Activated naive CD4-positive, alpha-beta T cell treated with anti-CD3 and anti-CD28 coated beads for 36 hours (primary cell): ENCODE measurements at regions of chr18 and their contacts with region 1.

Region 1: GRCh38 chr18:62425465-62426195 is 97.2 kb upstream of the ZCCHC2 start:
- DNase-seq: peak; percentile 80
- H3K4me3 Mint-ChIP-seq: peak overlapping the region; percentile 3
- H3K27ac Mint-ChIP-seq: peak overlapping the region; percentile 19
- H3K4me1 Mint-ChIP-seq: peaks cover 22% of the 10 kb centered on the region
- H3K27me3 Mint-ChIP-seq: no peaks in the 10 kb centered on the region

Region 2: DNA sequence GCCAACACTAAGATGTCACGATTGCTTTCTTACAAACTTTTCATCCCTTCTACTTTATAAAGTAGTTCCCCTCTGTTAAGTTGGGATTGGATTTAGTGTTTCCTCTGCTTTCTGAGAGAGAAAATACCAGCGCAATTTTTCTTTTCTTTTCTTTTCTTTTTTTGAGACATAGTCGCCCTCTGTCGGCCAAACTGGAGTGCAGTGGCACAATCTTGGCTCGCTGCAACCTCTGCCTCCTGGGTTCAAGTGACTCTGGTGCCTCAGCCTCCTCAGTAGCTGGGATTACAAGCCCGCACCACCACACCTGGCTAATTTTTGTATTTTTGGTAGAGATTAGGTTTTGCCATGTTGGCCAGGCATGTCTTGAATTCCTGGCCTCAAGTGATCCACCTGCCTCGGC is 229.5 kb before region 1 on chr18:
- CTCF ChIA-PET with region 1: no interaction called
- intact Hi-C with region 1: no loop called
- DNase-seq: no peak
- H3K4me3 Mint-ChIP-seq: no peak overlapping the region
- H3K27ac Mint-ChIP-seq: no peak overlapping the region
- H3K4me1 Mint-ChIP-seq: peaks cover 73% of the 10 kb centered on the region
- H3K27me3 Mint-ChIP-seq: no peaks in the 10 kb centered on the region

Region 3: GRCh38 chr18:62258616-62259015 is 167.0 kb before region 1 on chr18:
- CTCF ChIA-PET with region 1: no interaction called
- intact Hi-C with region 1: no loop called
- DNase-seq: no peak
- H3K4me3 Mint-ChIP-seq: no peak overlapping the region
- H3K27ac Mint-ChIP-seq: no peak overlapping the region
- H3K4me1 Mint-ChIP-seq: no peaks in the 10 kb centered on the region
- H3K27me3 Mint-ChIP-seq: no peaks in the 10 kb centered on the region

Region 4: DNA sequence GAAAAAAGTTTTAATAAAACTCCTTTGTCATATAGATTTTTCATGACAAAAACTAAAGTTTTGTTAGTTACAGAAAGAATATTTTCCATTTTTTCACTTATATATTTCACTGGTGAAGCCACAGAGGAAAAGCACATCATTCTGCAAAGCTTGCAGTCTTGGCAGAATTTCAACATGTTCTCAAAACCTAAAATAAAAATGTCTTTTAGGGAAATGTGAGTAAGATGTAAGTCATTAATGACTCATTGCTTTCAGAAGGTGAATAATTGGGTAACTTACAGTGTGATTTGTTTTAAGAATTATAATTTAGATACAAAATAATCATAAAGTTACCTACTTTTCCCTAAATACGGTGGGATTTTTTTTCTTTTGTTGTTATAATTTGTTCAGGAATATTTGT is 143.9 kb before region 1 on chr18:
- CTCF ChIA-PET with region 1: interaction called, 3 read pairs
- intact Hi-C with region 1: loop called (anchors 1 kb)
- DNase-seq: no peak
- H3K4me3 Mint-ChIP-seq: no peak overlapping the region
- H3K27ac Mint-ChIP-seq: no peak overlapping the region
- H3K4me1 Mint-ChIP-seq: peaks cover 39% of the 10 kb centered on the region
- H3K27me3 Mint-ChIP-seq: no peaks in the 10 kb centered on the region

Region 5: DNA sequence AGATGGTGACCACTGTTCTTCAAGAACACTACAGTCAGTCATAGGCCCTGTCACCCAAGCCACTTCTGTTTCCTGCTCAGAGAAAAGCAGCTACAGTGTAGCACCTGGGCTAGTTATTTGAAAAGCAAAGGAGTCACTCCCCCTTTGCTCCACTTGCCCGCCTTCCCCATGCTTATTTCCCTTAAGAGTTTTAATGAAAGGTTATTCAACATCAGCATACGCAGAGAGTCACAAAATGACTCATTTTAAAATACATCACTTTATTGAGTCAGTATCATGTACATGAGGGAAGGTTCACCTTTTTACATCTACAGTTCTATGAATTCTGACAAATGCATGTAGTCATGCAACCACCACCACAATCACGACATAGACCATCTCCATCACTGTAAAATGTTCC is 29.2 kb before region 1 on chr18:
- CTCF ChIA-PET with region 1: interaction called, 5 read pairs
- intact Hi-C with region 1: loop called (anchors 1 kb)
- DNase-seq: peak; percentile 40
- H3K4me3 Mint-ChIP-seq: no peak overlapping the region
- H3K27ac Mint-ChIP-seq: peak overlapping the region; percentile 4
- H3K4me1 Mint-ChIP-seq: peaks cover 9% of the 10 kb centered on the region
- H3K27me3 Mint-ChIP-seq: no peaks in the 10 kb centered on the region

Region 6: DNA sequence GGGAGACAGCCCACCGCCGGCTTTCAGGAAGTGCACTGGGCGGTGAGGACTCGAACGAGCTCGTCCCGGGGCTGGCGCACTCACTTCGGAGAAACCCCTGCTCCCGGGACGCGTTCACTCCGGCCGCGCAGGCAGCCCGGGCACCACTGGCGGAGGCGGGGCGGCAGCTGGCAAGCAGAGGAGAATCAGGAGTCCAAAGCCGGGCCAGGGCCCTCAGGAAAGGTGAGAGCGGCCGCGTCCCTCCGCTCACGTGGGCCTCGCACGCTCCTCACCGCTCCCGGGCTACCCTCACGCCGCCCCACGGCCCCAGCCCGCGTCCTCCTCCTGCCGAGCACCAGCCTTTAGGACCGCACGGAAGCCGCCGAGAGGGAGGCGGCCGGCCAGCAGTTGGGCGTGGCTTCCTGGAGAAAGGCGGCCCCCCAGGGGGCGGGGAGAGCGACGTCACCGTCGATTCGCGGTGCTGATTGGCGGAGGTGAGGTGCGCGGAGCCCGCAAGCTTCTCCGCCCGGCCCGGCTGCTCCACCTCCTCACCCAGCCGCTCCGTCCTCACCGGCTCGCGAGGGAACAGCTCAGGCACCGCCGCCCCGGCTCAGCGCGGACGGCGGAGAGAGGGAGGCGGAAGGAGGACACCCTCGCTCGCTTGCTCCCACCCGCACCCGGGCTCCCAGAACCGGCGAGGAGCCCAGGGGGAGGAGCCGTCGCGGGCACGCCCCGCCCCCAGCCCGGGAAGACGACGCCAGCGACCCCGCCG is 97.0 kb after region 1 on chr18 and contains the start of gene ZCCHC2:
- CTCF ChIA-PET with region 1: interaction called, 9 read pairs
- intact Hi-C with region 1: loop called (anchors 1 kb)
- DNase-seq: peak; percentile 98
- H3K4me3 Mint-ChIP-seq: peak within 1 kb of the TSS; percentile 92
- H3K27ac Mint-ChIP-seq: peak within 1 kb of the TSS; percentile 98
- H3K4me1 Mint-ChIP-seq: peaks cover 14% of the 10 kb centered on the region
- H3K27me3 Mint-ChIP-seq: no peaks in the 10 kb centered on the region
- total RNA-seq, gene ZCCHC2: 22.1 to 23.3 TPM

Region 7: GRCh38 chr18:62844850-62845643 is 419.4 kb after region 1 on chr18:
- CTCF ChIA-PET with region 1: no interaction called
- intact Hi-C with region 1: loop called (anchors 1 kb)
- DNase-seq: peak; percentile 57
- H3K4me3 Mint-ChIP-seq: no peak overlapping the region
- H3K27ac Mint-ChIP-seq: peak overlapping the region; percentile 24
- H3K4me1 Mint-ChIP-seq: peaks cover 24% of the 10 kb centered on the region
- H3K27me3 Mint-ChIP-seq: no peaks in the 10 kb centered on the region

Region 8: DNA sequence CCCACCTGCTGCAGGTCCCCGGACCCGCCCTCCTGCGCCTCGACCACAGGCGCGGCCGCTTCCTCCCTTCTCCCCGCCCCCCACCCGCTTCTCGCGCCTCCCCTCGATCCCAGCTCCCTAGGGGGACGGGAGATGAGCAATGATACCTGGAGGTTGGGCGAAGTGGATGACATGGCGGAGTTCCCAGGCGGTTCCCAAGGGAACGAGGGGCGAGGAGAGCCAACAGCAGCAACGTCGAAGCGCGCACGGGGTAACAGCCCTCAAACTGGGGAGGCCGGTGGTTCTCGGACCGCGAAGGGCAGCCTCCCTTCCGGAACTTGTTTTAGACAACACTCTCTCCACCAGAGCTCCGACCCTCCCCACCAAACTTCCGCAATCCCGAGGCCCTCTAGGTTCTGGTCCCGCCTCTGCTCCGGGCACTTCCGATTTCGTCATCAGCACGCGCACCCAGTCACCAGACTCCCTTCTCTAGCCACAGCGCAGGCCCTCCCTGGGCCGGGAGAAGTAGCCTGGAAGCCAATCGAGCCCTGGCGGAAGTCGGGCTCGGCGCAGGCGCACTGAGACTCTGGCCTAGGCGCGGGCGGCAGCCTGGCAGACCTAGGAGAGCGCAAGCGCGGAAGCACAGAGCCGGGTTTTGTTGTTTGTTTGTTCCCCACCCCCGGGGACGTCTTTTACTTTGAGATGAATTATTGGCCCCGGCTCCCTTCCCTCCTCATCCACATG is 996.6 kb after region 1 on chr18 and contains the start of gene VPS4B:
- CTCF ChIA-PET with region 1: no interaction called
- intact Hi-C with region 1: loop called (anchors 1 kb)
- DNase-seq: peak; percentile 100
- H3K4me3 Mint-ChIP-seq: peak within 1 kb of the TSS; percentile 83
- H3K27ac Mint-ChIP-seq: peak within 1 kb of the TSS; percentile 95
- H3K4me1 Mint-ChIP-seq: peaks cover 28% of the 10 kb centered on the region
- H3K27me3 Mint-ChIP-seq: no peaks in the 10 kb centered on the region
- total RNA-seq, gene VPS4B: 28.7 to 30.1 TPM